Ovary (tissue), 10 donors: ENCODE measurements at regions of chr22 and their contacts with region 1.

Region 1: DNA sequence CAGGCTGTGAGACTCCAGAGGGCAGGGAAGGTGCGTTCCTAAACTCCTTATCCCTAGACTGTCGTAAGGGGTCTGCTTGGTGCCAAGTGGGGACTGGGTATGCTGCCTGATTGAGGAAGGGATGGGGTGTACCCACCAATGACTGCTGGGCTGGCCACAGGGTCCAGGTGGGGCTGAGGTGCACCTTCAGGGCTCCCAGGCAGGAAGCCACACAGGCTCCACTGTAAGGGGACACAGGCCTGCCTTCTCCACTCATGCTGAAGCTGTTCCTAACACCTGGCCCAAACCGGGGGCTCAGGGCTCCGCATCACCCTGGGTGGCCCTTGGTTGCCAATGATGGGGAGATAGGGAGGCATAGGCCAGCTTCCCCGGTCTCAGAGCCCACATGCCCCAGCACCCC is 20.4 kb downstream of the CABP7 start:
- DNase-seq: no peak
- H3K4me3 ChIP-seq: no peak overlapping the region
- H3K27ac ChIP-seq: no peak overlapping the region
- H3K4me1 ChIP-seq: no peaks in the 10 kb centered on the region
- H3K27me3 ChIP-seq: no peaks in the 10 kb centered on the region
- CTCF ChIP-seq: no peak
- EP300 ChIP-seq: no peak
- POLR2A ChIP-seq: no peak

Region 2: DNA sequence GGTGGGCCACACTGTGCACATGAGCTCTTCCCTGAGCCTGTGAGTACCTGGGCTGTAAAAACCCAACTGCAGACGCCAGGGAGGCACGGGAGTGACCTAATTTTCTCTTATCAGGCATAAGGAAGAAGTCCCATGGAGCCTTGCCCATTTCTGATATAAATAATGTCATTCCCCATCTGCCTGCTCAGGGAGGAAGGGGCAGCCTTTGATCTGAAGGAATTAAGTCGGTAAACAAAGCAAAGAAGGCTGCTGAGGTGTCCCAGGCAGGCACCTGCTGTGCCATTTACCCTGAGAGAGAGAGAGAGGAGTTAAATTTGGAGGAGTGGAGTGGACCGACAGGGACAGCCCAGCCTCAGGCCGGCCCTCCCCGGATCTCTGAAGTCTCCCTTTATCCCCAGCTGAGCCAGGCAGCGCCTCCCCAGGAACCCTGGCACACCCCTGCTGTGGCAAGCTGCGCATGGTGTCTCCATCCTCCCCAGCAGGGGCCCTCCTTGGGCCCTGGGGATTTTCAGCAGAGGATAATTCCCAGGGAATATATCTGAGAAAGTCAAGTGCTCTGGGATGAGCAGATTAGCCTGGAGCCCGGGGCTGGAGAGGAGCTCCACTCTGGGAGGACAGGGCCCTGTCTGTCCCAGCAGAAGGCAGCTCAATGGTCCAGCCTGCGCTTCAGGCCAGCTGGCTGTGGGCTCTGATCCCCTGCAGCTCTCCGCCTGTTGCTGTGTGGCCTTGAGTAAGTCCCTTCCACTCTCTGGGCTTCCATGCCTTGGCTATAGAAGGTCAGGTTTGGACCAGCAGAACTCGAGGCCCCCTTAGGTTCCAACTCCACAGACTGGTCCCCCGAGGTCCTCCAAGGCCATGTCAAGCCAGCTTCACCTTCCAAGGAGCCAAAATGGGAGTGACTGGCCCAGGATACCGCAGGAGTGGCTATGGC is 38.0 kb before region 1 on chr22:
- intact Hi-C with region 1: loop called in 1 of 4 experiments (anchors 2 kb)
- DNase-seq: no peak
- H3K4me3 ChIP-seq: no peak overlapping the region
- H3K27ac ChIP-seq: no peak overlapping the region
- H3K4me1 ChIP-seq: no peaks in the 10 kb centered on the region
- H3K27me3 ChIP-seq: no peaks in the 10 kb centered on the region
- CTCF ChIP-seq: no peak
- EP300 ChIP-seq: no peak
- POLR2A ChIP-seq: no peak